ENCODE measurements at regions of chr2 and their contacts with region 1.

Region 1: DNA sequence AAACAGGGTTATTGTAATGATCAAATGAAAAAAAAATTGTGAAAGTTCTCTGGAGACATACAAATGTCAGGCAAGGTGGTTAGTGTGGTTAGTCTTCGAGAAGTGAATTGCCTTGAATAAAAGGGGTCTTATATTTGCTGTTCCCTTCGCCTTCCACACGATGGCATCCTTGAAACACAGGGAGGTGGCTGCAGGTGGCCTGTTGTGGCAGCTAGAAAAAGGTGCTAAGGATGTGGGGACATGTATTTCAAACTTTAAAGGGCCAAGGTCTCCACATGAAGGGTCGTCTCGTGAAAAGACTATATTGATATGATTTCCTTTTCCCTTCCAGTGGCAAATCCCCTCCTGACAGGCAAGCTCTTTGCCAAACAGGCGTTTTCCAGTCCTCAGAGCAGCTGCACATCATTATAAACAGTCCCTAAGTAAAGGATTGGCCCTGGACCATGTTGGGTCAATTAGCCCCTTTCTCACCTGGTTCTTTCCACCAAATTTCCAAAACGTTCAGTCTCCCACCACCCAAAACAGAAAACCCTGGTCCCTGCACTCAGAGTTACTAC is 68.5 kb downstream of the COPS8 start:
- DNase-seq: peak; percentile 30
- H3K4me3 Mint-ChIP-seq: no peak overlapping the region
- H3K27ac Mint-ChIP-seq: peak overlapping the region; percentile 94
- H3K4me1 Mint-ChIP-seq: peaks cover 42% of the 10 kb centered on the region
- H3K27me3 Mint-ChIP-seq: no peaks in the 10 kb centered on the region

Region 2: GRCh38 chr2:237085248-237086221 is 68.6 kb before region 1 on chr2 and contains the start of gene COPS8:
- intact Hi-C with region 1: loop called (anchors 5 kb)
- DNase-seq: peak; percentile 90
- H3K4me3 Mint-ChIP-seq: peak within 1 kb of the TSS; percentile 98
- H3K27ac Mint-ChIP-seq: peak within 1 kb of the TSS; percentile 98
- H3K4me1 Mint-ChIP-seq: peaks cover 15% of the 10 kb centered on the region
- H3K27me3 Mint-ChIP-seq: no peaks in the 10 kb centered on the region
- total RNA-seq, gene COPS8: 59.2 and 63.3 TPM in 2 replicates

Region 3: DNA sequence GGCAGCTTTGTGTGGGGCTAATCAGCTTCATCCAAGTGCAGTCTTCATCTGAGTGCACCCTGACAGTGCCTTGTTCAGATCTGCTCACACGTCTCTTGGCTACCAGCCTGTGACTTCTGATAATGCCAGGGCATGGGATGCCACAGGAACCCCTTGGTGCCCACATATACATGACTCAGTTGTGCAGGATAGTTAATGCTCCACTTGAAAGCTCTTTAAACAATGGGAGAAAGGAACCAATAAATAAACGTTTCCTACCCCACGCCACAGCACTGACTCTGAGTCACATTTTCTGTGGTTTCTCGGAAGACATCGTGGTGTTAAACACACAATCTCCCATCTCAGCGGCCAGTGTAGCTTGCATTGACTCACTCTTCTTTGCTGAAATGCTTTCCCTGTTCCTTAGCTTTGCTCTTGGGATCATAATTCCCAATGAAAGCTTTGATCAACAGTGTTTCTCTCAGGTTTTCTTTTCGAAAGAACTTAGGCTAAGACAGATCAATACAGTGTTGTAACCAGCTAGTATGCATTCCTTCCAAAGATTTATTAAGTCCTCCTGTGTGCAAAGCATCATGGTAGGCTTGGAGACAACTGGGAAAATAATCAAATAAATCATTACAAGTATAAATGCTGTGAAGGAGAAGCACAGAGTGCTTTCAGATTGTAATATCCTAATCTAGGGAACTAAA is 73.6 kb after region 1 on chr2:
- intact Hi-C with region 1: loop called (anchors 2 kb)
- DNase-seq: no peak
- H3K4me3 Mint-ChIP-seq: no peak overlapping the region
- H3K27ac Mint-ChIP-seq: peak overlapping the region; percentile 34
- H3K4me1 Mint-ChIP-seq: peaks cover 12% of the 10 kb centered on the region
- H3K27me3 Mint-ChIP-seq: peaks cover under 1% of the 10 kb centered on the region

Region 4: DNA sequence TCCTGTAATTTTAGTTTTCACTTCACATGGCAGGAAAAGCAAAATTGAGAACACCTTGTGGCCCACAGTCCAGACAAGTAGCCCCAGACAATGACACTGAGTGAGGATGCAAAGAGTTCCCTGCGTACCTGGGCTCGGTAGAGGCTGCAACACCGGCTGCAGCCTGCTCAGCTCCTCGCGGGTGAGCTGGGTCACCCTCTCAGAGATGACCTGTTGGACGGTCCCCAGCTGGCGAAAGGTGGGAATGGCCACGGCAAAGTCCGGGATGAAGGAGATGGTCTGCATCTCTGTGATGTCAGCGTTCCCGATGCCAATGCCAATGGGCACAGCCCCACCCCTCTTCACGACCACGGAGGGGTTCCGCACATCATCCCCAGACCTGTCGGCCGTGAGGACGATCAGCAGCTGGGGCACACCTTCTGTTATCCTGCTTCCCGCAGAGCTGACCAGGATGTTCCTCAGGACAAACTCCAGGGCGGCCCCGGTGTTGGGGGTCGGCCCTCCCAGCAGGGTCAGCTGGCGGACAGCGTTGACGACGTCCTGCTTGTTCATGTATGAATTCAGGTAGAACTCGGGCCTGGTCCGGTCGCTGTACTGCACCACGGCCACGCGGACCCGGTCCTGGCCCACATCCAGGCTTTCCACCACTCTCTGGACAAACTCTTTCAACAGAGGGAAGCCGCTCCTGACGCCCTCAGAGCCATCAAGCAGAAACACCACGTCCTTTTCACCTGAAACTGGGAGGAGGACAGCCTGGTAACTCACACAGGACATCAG is 220.3 kb after region 1 on chr2:
- intact Hi-C with region 1: no loop called
- DNase-seq: no peak
- H3K4me3 Mint-ChIP-seq: no peak overlapping the region
- H3K27ac Mint-ChIP-seq: no peak overlapping the region
- H3K4me1 Mint-ChIP-seq: no peaks in the 10 kb centered on the region
- H3K27me3 Mint-ChIP-seq: no peaks in the 10 kb centered on the region

Region 5: GRCh38 chr2:237427769-237428506 is 273.8 kb after region 1 on chr2:
- intact Hi-C with region 1: loop called (anchors 1 kb)
- DNase-seq: peak; percentile 49
- H3K4me3 Mint-ChIP-seq: peak overlapping the region; percentile 67
- H3K27ac Mint-ChIP-seq: peak overlapping the region; percentile 93
- H3K4me1 Mint-ChIP-seq: peaks cover 76% of the 10 kb centered on the region
- H3K27me3 Mint-ChIP-seq: peaks cover under 1% of the 10 kb centered on the region

Region 6: GRCh38 chr2:237441605-237442274 is 287.6 kb after region 1 on chr2:
- intact Hi-C with region 1: loop called (anchors 1 kb)
- DNase-seq: no peak
- H3K4me3 Mint-ChIP-seq: peak overlapping the region; percentile 41
- H3K27ac Mint-ChIP-seq: peak overlapping the region; percentile 86
- H3K4me1 Mint-ChIP-seq: peaks cover 58% of the 10 kb centered on the region
- H3K27me3 Mint-ChIP-seq: no peaks in the 10 kb centered on the region

Region 7: GRCh38 chr2:237512774-237513466 is 358.8 kb after region 1 on chr2:
- intact Hi-C with region 1: loop called (anchors 1 kb)
- DNase-seq: peak; percentile 57
- H3K4me3 Mint-ChIP-seq: no peak overlapping the region
- H3K27ac Mint-ChIP-seq: no peak overlapping the region
- H3K4me1 Mint-ChIP-seq: no peaks in the 10 kb centered on the region
- H3K27me3 Mint-ChIP-seq: peaks cover 3% of the 10 kb centered on the region

Region 8: DNA sequence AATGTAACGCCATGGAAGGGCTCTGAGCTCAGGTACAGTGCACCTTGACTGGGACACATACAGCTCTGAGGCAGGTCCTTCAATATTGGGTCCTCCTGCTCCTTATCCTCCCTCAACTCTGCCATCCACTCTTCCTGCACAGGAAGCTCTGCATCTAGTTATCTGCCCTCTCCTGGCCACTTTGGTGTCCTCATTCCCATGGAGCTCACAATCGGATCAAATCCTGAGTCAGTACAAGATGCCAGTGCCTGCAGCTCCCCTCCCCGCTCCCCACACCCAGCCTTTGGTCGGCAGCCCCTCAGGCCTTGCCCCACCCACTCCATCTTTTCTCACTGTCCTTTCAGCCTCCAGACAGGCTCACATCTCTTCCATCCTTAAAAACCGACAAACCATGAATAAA is 531.2 kb after region 1 on chr2:
- intact Hi-C with region 1: loop called (anchors 5 kb)
- DNase-seq: no peak
- H3K4me3 Mint-ChIP-seq: no peak overlapping the region
- H3K27ac Mint-ChIP-seq: no peak overlapping the region
- H3K4me1 Mint-ChIP-seq: peaks cover 43% of the 10 kb centered on the region
- H3K27me3 Mint-ChIP-seq: no peaks in the 10 kb centered on the region